ENCODE measurements at regions of chrX and their contacts with region 1.

Region 1: GRCh38 chrX:56978172-56978571 is 17.2 kb downstream of the SPIN3 start:
- DNase-seq: peak; percentile 39
- H3K4me3 ChIP-seq: no peak overlapping the region
- H3K27ac ChIP-seq: no peak overlapping the region
- H3K4me1 ChIP-seq: no peaks in the 10 kb centered on the region
- H3K27me3 ChIP-seq: peaks cover 6% of the 10 kb centered on the region; the same call in 1 of the 2 replicates
- CTCF ChIP-seq: peak; percentile 72
- EP300 ChIP-seq: no peak
- RAD21 ChIP-seq: peak; percentile 79

Region 2: DNA sequence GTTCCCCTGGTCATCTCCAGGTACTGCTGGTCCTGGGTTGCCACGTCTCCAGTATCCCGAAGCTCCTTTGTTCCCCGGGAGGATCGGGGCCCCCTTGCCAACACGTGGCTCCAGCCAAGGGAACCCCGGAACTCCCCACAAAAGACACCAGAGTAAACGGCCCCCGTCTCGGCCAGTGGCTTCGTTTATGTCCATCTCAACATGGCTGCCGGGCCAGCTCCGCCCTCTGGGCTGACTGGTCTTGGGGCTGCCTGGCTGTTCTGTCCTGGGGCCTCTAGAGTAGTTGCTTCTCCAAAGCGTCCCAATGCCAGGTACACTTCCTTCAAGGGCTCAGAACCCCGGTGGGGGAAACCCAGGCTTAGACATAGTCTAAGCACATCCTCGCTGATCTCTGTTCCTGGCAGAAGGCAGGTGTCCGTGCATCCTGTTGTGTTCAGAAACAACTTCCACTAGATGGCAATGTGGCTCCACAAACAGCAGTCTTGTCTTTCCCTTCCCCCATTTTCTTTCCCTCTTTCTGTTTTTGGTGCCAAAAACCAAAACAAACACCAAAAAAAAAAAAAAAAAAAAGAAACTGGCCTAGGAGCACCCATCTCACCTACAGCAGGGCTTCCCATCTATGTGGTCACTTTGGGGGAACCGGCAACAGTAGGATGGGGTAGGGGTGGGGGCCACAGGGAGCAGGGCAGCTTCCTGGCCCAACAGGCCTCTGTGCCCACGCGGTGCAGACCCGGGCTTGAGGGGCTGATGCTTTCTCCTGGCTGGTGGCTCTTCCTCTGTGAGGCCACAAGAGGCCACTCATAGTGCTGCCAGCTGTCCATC is 213.8 kb before region 1 on chrX:
- CTCF ChIA-PET with region 1: interaction called, 25 read pairs
- POLR2A ChIA-PET with region 1: no interaction called
- DNase-seq: peak; percentile 79
- H3K4me3 ChIP-seq: peak overlapping the region; percentile 50 to 54
- H3K27ac ChIP-seq: peak overlapping the region; percentile 16 to 86; a peak in 3 of 4 replicates
- H3K4me1 ChIP-seq: peaks cover 0 to 15% of the 10 kb centered on the region in 2 experiments; a peak in 1 of 4 replicates
- H3K27me3 ChIP-seq: no peaks in the 10 kb centered on the region
- CTCF ChIP-seq: peak; percentile 68
- EP300 ChIP-seq: no peak
- RAD21 ChIP-seq: peak; percentile 84

Region 3: DNA sequence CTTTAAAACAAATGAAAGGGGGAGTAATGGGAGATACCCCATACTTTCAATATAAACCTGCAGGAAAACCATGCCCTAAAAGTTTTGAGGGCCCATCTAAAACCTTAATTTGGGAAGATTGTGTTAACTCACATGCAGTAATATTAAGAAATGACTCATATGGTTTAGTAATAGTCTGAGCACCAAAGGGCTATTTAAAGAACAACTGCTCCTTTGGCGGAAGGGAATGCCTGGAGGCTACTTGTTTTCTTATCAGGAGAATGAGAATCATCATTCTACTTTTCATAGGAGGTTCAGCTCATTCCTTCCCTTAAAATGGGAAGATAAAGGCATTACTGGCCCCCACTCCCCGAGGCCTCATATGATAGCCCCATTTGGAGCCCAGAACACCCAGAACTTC is 30.5 kb before region 1 on chrX:
- CTCF ChIA-PET with region 1: no interaction called
- POLR2A ChIA-PET with region 1: no interaction called
- DNase-seq: no peak
- H3K4me3 ChIP-seq: no peak overlapping the region; a peak in 1 of 4 replicates
- H3K27ac ChIP-seq: no peak overlapping the region
- H3K4me1 ChIP-seq: no peaks in the 10 kb centered on the region
- H3K27me3 ChIP-seq: no peaks in the 10 kb centered on the region
- CTCF ChIP-seq: no peak
- EP300 ChIP-seq: no peak
- RAD21 ChIP-seq: no peak

Region 4: DNA sequence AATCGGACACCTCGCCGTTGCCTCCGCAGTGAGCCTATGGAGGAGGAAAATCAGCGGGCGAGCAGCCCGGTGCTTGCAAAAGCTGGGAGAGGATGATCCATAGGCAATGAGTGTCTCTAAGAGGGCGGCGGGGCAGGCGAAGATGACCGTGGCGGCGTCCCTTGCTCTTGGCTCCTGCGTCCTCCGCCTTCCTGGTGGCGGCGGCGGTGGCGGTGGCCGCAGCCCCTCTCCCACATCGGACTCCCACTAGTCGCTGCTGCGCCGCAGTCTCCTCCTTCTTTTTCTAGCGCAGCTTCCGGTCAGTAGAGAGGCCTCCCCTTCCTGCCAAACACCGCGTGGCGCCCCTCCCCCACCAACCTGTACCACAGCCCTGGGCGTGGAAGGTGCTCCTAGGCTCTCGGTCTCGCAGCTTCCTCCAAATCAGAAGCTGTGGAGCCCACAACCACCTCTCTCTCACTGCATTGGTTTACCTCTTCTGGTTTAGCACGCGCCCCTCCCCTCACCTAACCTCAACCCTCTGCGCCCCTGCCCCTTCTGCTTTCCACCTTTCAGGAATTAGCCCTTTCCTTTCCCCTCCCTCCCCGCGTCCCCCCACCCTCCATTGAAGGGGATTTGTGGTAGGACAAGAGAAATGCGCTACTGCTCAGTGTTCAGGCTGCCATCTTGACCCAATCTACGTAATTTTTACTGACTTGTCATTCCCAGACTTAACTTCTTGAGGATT is 17.3 kb after region 1 on chrX and contains the start of gene SPIN3:
- CTCF ChIA-PET with region 1: interaction called, 13 read pairs
- POLR2A ChIA-PET with region 1: interaction called, 5 read pairs
- DNase-seq: peak; percentile 80
- H3K4me3 ChIP-seq: peak within 1 kb of the TSS; percentile 63 to 64
- H3K27ac ChIP-seq: peak within 1 kb of the TSS in 1 of 2 experiments; percentile 85; a peak in 2 of 4 replicates
- H3K4me1 ChIP-seq: peaks cover 0 to 2% of the 10 kb centered on the region in 2 experiments; a peak in 1 of 4 replicates
- H3K27me3 ChIP-seq: no peaks in the 10 kb centered on the region
- CTCF ChIP-seq: no peak
- EP300 ChIP-seq: no peak
- RAD21 ChIP-seq: no peak
- polyA plus RNA-seq, gene SPIN3: 10.0 and 12.6 TPM in 2 replicates

Region 5: GRCh38 chrX:57156397-57157049 is 178.4 kb after region 1 on chrX:
- CTCF ChIA-PET with region 1: no interaction called
- POLR2A ChIA-PET with region 1: no interaction called
- DNase-seq: no peak
- H3K4me3 ChIP-seq: no peak overlapping the region; a peak in 1 of 4 replicates
- H3K27ac ChIP-seq: no peak overlapping the region
- H3K4me1 ChIP-seq: no peaks in the 10 kb centered on the region
- H3K27me3 ChIP-seq: no peaks in the 10 kb centered on the region
- CTCF ChIP-seq: peak; percentile 44
- EP300 ChIP-seq: no peak
- RAD21 ChIP-seq: peak; percentile 59